ENCODE measurements at regions of chr22 and their contacts with region 1.

Region 1: DNA sequence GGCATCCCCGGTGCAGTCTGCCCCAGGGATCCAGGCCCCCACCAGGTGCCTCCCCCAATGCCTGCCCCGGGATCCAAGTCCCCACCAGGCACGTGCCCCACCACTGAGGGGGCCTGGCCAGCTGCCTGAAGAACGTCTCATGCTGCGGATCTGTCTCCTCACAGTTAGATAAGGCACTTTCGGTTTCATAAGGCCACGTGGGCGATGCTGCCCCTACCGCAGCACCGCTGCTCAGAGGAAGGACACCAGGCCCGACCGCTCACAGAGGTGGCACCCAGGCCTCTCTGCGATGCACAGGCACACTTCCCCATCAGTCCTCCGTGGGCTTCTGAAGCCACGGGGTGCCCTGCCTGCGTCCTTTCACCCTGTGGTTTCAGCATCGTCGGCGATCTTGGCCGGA is 68.1 kb upstream of the BID start:
- DNase-seq: no peak
- H3K4me3 ChIP-seq: no peak overlapping the region
- H3K27ac ChIP-seq: no peak overlapping the region
- H3K4me1 ChIP-seq: no peaks in the 10 kb centered on the region
- H3K27me3 ChIP-seq: no peaks in the 10 kb centered on the region

Region 2: DNA sequence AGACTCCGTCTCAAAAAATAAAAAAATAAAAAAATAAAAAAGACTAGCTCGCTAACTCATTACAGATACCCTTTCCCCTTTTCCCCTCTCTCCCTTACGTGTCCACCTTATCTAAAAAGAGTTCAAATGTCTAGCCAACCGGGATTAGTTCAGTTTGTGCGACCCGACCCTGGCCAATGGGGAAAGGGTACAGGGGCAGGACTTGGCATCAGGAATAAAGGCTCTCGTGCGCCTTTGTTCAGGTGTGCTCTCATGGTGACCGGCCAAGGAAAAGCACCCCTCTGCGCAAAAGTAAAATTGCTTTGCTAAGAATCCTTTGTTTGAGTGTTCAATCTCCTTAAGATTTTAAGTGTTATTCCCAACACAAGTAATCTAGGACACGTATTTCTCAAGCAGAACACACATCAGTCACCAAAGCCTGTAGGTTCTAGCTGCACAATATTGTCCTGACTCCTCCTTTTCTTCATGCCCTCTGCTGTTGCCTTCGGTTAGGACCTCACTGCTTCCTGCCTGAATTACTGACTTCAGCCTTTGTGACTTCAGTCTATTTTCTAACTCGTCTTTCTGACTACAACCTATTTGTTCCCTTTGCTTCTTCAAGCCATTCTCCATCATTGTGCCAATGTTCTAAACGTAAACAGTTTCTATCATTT is 493.8 kb before region 1 on chr22:
- in situ Hi-C with region 1: no loop called
- DNase-seq: no peak
- H3K4me3 ChIP-seq: no peak overlapping the region
- H3K27ac ChIP-seq: no peak overlapping the region
- H3K4me1 ChIP-seq: no peaks in the 10 kb centered on the region
- H3K27me3 ChIP-seq: no peaks in the 10 kb centered on the region

Region 3: DNA sequence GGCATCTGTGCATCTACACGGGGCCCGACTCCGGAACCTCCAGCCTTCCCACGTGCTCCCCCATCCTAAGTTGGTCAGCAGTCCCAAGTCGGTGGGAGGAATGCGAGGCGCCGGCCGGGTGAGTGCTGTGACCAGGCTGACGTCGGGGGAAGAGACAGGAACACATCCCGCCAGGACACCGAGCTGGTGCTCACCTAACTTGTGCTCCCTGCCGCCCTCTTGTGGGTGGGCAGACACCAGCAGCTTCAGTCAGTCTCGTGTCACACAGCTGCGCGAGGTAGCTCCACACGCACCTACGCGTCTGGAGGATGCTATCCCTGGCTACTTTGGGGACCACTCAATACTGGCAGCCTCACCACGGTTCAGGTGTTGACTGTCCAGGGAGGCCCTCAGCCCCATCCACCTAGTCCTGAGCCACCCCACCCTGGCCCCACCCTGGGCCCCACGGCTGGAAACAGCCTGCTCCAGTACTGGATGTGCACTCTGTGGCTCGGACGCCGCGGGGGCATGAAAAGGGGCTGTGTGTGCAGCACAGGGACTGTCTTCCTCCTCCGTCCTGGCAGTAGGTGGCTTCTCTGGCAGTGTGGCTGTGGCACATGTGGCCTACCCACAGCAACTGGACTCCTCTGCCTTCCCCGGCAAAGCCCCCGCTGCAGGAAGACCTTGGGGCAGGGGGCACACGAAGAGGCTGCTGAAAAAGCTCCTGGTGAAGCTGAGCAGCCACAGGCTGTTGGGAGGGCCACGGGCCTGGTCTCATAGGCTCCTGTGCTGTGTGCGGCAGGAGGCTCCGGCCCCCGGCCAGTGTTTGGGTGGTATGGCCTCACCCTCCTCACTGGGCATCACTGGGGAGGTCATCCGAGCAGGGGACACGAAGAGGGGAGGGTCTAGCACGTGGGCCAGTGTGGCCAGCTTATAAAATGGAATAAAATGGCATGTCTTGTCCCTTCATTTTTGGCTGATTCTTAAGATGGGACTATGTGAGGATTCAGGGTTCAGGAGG is 56.9 kb before region 1 on chr22:
- in situ Hi-C with region 1: loop called (anchors 10 kb)
- DNase-seq: peak; percentile 49
- H3K4me3 ChIP-seq: no peak overlapping the region
- H3K27ac ChIP-seq: no peak overlapping the region
- H3K4me1 ChIP-seq: peaks cover 15% of the 10 kb centered on the region
- H3K27me3 ChIP-seq: no peaks in the 10 kb centered on the region

Measured in GM23248 (cell line).